Aorta (tissue), 5 donors: ENCODE measurements at regions of chr9 and their contacts with region 1.

Region 1: GRCh38 chr9:97921959-97922724 is at the start of gene TRMO:
- DNase-seq: peak; percentile 99 to 100
- ATAC-seq: peak; percentile 97
- H3K4me3 ChIP-seq: peak within 1 kb of the TSS; percentile 44 to 88
- H3K27ac ChIP-seq: peak within 1 kb of the TSS; percentile 77 to 91
- H3K4me1 ChIP-seq: no peaks in the 10 kb centered on the region
- H3K27me3 ChIP-seq: no peaks in the 10 kb centered on the region
- total RNA-seq, gene TRMO: 9.6 to 10.7 TPM

Region 2: DNA sequence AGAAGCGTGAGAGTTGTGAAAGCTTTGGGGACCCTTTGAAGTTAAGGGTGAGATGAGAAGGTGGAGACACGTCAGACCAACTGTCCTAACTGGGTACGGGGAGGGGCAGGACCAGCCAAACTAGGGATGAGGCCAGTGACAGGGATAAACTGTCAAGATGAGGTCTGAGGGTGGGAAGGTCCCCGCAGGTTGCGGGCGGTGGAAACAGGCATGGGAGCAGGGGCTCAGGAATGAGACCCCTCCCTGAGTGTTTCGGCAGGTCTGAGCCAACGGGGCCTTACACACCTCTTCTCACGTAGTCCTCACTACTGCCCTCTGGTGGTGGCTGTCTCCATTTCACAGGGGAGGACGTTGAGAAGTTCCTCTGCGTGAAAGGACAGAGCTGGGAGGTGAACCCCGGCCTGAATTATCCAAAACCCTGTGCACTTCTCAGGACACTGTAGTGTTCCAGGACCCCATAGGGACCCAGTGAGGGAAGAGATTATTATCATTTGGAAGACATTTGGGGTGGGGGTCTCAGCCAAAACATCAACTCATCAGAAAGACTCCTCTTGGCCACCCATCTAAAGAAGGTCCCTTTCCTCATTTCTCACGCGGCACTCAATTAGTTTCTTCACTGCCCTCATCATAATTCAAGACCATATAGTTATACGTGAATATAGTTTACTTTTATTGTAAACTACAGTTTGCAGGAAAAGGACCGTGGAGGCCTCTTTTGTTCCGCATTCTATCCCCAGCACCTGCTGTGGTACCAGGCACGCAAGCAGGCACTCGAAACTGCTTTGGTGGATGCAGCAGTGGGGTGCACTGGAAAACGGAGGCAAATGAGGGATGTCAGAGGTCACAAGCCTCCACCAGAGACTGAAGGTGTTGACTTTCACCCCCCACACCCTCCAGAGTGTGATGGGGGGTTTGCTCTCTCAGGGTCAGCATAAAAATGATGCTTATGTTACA is 112.7 kb after region 1 on chr9:
- intact Hi-C with region 1: loop called (anchors 2 kb)
- DNase-seq: peak; percentile 89 to 92
- ATAC-seq: peak; percentile 89
- H3K4me3 ChIP-seq: no peak overlapping the region
- H3K27ac ChIP-seq: peak overlapping the region in 1 of 2 donors; percentile 53
- H3K4me1 ChIP-seq: no peaks in the 10 kb centered on the region
- H3K27me3 ChIP-seq: no peaks in the 10 kb centered on the region

Region 3: DNA sequence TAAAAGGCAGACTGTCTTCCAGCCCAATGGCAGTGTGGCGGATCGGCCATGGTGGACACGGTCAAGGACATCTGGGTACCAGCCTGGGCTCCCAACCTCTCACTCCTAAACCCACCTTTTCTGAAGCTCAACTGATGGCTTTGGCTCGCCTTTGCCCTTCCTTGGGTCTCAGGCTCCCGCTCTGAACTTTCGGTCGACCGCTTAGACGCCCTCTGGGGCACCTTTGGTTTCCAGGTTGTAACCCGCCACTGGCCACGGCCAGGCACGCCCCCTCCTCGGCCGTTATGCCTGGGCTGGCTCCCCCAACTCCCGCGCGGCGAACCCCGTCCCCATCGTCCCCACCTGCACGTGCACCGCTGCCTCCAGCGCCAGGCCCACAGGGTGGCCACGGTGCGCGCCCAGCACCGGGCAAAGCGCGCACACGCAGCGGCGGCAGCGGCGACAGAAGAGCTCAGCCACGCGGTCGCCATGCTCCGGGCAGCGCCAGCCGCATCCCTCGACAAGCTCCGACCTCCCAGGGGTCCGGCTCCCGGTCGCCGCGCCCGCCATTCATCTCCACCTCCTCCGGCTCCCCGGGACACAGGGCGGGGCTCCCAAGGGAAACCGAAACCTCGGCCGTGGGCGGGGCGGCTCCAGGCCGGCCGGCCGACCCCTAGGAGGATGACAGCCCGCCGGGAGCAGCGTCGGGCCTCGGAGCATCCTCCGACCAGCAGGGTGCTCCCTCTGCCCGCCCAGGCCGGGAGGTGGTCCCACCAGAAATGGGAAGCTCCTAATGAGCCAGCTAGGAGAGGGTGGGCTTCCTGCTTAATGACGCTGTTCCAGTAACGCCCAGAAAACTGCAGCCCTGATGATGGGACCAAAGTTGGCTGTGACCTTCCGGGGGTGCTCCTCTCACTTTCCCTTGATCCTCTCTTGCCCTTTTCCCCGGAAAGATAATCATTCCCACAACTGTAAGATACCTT is 196.8 kb after region 1 on chr9 and contains the start of gene TRIM14:
- intact Hi-C with region 1: no loop called
- DNase-seq: peak; percentile 84 to 85
- ATAC-seq: peak; percentile 71
- H3K4me3 ChIP-seq: peak within 1 kb of the TSS; percentile 33 to 45
- H3K27ac ChIP-seq: no peak within 1 kb of the TSS
- H3K4me1 ChIP-seq: no peaks in the 10 kb centered on the region
- H3K27me3 ChIP-seq: no peaks in the 10 kb centered on the region
- total RNA-seq, gene TRIM14: 8.5 to 17.6 TPM

Region 4: DNA sequence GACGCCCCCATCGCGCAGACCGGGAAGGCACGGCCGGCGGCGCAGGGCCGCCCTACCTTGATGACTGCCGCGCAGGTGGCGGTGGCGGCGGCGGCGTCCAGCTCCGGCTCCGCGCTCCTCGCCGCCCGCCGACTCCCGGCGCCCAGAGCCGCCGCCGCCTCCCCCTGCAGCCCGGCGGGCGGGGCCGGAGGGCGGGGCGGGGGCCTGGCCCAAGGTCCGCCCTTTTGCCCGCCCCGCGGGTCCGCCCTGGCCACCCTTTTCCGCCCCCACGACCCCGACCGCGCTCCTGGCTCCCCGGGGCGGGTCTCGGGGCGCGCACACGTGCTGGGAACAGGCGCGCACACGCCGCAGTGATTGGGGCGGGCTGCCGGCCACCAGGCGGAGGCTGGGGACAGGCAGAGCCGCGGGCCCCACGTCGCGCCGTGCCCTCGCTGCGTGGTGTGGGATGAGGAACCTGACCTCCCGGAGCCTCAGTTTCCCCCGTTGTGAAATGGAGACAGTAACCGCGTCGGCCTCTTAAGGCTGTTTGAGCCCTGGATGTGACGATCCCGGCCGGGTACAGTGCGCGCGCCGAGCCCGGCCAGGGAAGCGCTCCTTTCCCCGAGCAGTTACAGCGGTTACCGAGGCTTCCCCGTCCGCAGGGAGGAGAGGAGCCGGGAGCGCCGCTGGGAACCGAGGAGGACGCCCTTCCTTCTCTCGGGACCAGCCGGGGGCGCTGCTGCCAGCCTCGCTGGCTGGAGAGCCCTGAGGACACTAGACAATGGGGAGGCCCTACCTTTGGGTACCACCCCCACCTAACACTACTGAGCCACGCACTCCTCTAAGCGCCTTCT is 270.6 kb after region 1 on chr9 and contains the start of gene CORO2A:
- intact Hi-C with region 1: loop called in 1 of 2 experiments (anchors 2 kb)
- DNase-seq: peak; percentile 78 to 90
- ATAC-seq: peak; percentile 87
- H3K4me3 ChIP-seq: peak within 1 kb of the TSS; percentile 62
- H3K27ac ChIP-seq: no peak within 1 kb of the TSS
- H3K4me1 ChIP-seq: no peaks in the 10 kb centered on the region
- H3K27me3 ChIP-seq: no peaks in the 10 kb centered on the region
- total RNA-seq, gene CORO2A: 1.6 to 3.7 TPM

Region 5: GRCh38 chr9:98255578-98256296 is 333.6 kb after region 1 on chr9 and contains the start of gene TBC1D2:
- intact Hi-C with region 1: loop called in 1 of 2 experiments (anchors 1 kb)
- DNase-seq: peak; percentile 97 to 98
- ATAC-seq: peak; percentile 99
- H3K4me3 ChIP-seq: peak within 1 kb of the TSS; percentile 77 to 92
- H3K27ac ChIP-seq: peak within 1 kb of the TSS; percentile 23 to 94
- H3K4me1 ChIP-seq: no peaks in the 10 kb centered on the region
- H3K27me3 ChIP-seq: no peaks in the 10 kb centered on the region
- total RNA-seq, gene TBC1D2: 9.7 to 12.4 TPM

Region 6: GRCh38 chr9:98263482-98264357 is 341.6 kb after region 1 on chr9:
- intact Hi-C with region 1: loop called (anchors 2 kb)
- DNase-seq: peak; percentile 86 to 91
- ATAC-seq: peak; percentile 80
- H3K4me3 ChIP-seq: no peak overlapping the region
- H3K27ac ChIP-seq: no peak overlapping the region
- H3K4me1 ChIP-seq: no peaks in the 10 kb centered on the region
- H3K27me3 ChIP-seq: no peaks in the 10 kb centered on the region